Activated B cell treated with CpG ODN at 0.5 μM for 24 hours (primary cell): ENCODE measurements at regions of chrX and their contacts with region 1.

Region 1: DNA sequence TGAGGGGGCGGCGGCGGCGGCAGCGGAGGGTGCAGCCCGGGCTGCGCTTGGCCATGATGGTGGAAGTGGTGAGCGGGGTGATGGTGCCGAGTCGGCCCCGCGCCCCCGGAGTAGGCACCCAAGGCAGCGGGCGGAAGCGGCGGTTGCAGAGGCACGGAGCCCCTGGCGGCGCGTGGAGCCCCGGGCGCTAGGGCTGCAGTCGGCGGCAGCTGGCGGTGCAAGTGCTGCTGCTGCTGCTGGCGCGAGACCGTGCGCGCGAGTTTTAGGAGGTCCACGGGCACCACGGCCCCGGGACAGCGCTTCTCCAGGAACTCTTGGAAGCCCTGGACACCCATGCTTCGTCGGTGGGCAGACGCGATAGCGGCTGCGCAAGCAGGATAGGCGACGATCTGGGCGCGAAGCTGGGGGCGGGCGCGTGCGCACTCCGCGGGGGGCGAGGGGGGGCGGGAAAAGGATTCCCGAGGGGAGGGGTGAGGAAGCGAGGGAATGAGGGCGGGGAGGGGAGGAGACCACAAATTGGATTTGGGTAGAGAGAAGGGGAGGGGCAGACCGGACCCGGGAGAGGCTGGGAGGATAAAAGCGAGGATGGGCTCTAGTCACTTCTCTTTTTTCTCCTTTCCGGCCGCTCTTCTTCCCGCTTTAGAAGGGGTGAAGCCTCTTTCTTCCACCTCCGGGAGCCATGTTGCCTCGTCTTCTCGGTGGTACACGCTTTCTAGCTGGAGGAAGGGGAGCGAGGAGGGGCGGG is at the start of gene FAM120C:
- DNase-seq: peak; percentile 41
- ATAC-seq: peak; percentile 79
- H3K4me3 Mint-ChIP-seq: peak within 1 kb of the TSS; percentile 83
- H3K27ac Mint-ChIP-seq: peak within 1 kb of the TSS; percentile 85
- H3K4me1 Mint-ChIP-seq: peaks cover 41% of the 10 kb centered on the region
- H3K27me3 Mint-ChIP-seq: no peaks in the 10 kb centered on the region
- CTCF ChIP-seq: no peak
- total RNA-seq, gene FAM120C: 14.0 and 20.2 TPM in 2 replicates

Region 2: DNA sequence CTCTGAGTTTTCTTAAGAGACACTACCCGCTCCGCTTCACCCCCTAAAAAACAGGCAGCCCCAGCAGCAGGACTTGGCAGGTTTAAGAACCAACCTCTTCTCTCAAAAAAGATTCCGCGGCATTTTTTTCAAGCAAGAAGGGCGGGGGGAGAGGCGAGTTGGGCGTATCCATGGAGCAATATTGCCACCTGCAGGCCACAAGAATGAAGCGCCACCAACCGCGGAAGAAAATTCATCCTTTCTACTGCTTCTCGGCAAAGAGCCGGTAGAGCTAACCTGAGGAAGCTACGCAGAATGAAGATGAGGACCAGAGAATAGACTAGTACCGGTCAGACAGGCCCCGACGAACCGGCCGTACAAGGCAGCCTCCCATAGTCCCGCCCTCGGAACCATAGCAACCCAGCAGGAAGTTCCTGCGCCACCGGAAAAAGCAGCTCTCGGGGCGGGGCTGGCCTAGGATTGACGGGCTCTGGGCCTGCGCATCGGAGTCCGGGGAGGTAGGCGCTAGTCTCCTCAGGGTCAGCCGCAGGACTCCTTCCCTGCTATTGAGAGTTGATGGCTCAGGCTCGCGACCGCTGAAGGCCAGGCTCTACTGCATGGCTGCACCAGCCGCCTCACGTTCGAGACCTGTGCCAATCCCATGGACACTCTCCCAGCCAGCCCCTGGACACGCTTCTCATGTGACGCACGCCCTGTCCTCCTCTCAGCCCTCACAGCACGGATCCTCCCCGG is 1921.4 kb before region 1 on chrX:
- CTCF ChIA-PET with region 1: no interaction called
- POLR2A ChIA-PET with region 1: interaction called, 13 read pairs
- intact Hi-C with region 1: no loop called
- DNase-seq: peak; percentile 73
- ATAC-seq: peak; percentile 95
- H3K4me3 Mint-ChIP-seq: peak overlapping the region; percentile 92
- H3K27ac Mint-ChIP-seq: peak overlapping the region; percentile 96
- H3K4me1 Mint-ChIP-seq: peaks cover 11% of the 10 kb centered on the region
- H3K27me3 Mint-ChIP-seq: no peaks in the 10 kb centered on the region
- CTCF ChIP-seq: no peak

Region 3: GRCh38 chrX:53433651-53434639 is 749.1 kb before region 1 on chrX and contains the start of gene HSD17B10:
- CTCF ChIA-PET with region 1: no interaction called
- POLR2A ChIA-PET with region 1: no interaction called
- intact Hi-C with region 1: loop called (anchors 1 kb)
- DNase-seq: peak; percentile 75
- ATAC-seq: peak; percentile 98
- H3K4me3 Mint-ChIP-seq: peak within 1 kb of the TSS; percentile 93
- H3K27ac Mint-ChIP-seq: peak within 1 kb of the TSS; percentile 90
- H3K4me1 Mint-ChIP-seq: peaks cover 12% of the 10 kb centered on the region
- H3K27me3 Mint-ChIP-seq: peaks cover 6% of the 10 kb centered on the region
- CTCF ChIP-seq: no peak
- total RNA-seq, gene HSD17B10: 108 and 114 TPM in 2 replicates

Region 4: GRCh38 chrX:54529552-54530357 is 346.7 kb after region 1 on chrX and contains the start of gene GNL3L:
- CTCF ChIA-PET with region 1: no interaction called
- POLR2A ChIA-PET with region 1: interaction called, 4 read pairs
- intact Hi-C with region 1: loop called (anchors 1 kb)
- DNase-seq: peak; percentile 66
- ATAC-seq: peak; percentile 83
- H3K4me3 Mint-ChIP-seq: peak within 1 kb of the TSS; percentile 94
- H3K27ac Mint-ChIP-seq: peak within 1 kb of the TSS; percentile 97
- H3K4me1 Mint-ChIP-seq: peaks cover 43% of the 10 kb centered on the region
- H3K27me3 Mint-ChIP-seq: no peaks in the 10 kb centered on the region
- CTCF ChIP-seq: no peak
- total RNA-seq, gene GNL3L: 67.1 and 70.5 TPM in 2 replicates

Region 5: GRCh38 chrX:54999717-55000598 is 816.9 kb after region 1 on chrX and contains the start of gene APEX2:
- CTCF ChIA-PET with region 1: no interaction called
- POLR2A ChIA-PET with region 1: interaction called, 11 read pairs
- intact Hi-C with region 1: loop called (anchors 2 kb)
- DNase-seq: peak; percentile 74
- ATAC-seq: peak; percentile 95
- H3K4me3 Mint-ChIP-seq: peak within 1 kb of the TSS; percentile 94
- H3K27ac Mint-ChIP-seq: peak within 1 kb of the TSS; percentile 89
- H3K4me1 Mint-ChIP-seq: peaks cover 19% of the 10 kb centered on the region
- H3K27me3 Mint-ChIP-seq: no peaks in the 10 kb centered on the region
- CTCF ChIP-seq: no peak
- total RNA-seq, gene APEX2: 19.6 and 22.2 TPM in 2 replicates